Gastrocnemius medialis (tissue), 4 donors: ENCODE measurements at regions of chr9 and their contacts with region 1.

Region 1: DNA sequence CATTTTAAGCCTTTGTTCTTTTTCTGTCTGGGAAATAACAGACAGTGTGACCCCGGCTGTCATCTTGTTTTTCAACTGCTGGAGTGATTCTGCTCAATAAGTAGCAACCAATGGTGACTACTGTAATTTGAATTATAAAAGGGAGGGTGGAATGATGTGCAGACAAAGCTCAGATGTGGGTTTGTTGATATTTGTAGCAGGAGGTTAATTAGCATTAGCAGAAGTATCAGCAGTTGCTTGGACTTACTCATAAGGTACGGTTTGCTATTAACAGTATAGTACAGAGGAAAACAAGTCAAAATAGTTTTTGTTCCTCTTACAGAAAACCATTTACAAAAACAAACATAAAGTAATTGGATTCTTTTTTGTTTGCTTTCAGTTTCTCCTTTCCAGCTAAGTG is 140.4 kb downstream of the TUSC1 start:
- DNase-seq: no peak
- ATAC-seq: no peak
- H3K4me3 ChIP-seq: no peak overlapping the region
- H3K27ac ChIP-seq: no peak overlapping the region
- H3K4me1 ChIP-seq: no peaks in the 10 kb centered on the region
- H3K27me3 ChIP-seq: no peaks in the 10 kb centered on the region
- CTCF ChIP-seq: no peak
- POLR2A ChIP-seq: no peak

Region 2: GRCh38 chr9:25412646-25413045 is 125.2 kb before region 1 on chr9:
- in situ Hi-C with region 1: no loop called
- intact Hi-C with region 1: no loop called
- DNase-seq: no peak
- ATAC-seq: no peak
- H3K4me3 ChIP-seq: no peak overlapping the region
- H3K27ac ChIP-seq: no peak overlapping the region
- H3K4me1 ChIP-seq: peaks cover 0 to 4% of the 10 kb centered on the region in 2 donors
- H3K27me3 ChIP-seq: no peaks in the 10 kb centered on the region
- CTCF ChIP-seq: no peak
- POLR2A ChIP-seq: no peak

Region 3: GRCh38 chr9:25427898-25428297 is 109.9 kb before region 1 on chr9:
- in situ Hi-C with region 1: loop called in 1 of 4 experiments (anchors 25 kb)
- intact Hi-C with region 1: no loop called
- DNase-seq: no peak
- ATAC-seq: no peak
- H3K4me3 ChIP-seq: no peak overlapping the region
- H3K27ac ChIP-seq: no peak overlapping the region
- H3K4me1 ChIP-seq: no peaks in the 10 kb centered on the region
- H3K27me3 ChIP-seq: no peaks in the 10 kb centered on the region
- CTCF ChIP-seq: no peak
- POLR2A ChIP-seq: no peak

Region 4: GRCh38 chr9:25570802-25571201 is 33.0 kb after region 1 on chr9:
- in situ Hi-C with region 1: no loop called
- intact Hi-C with region 1: no loop called
- DNase-seq: no peak
- ATAC-seq: no peak
- H3K4me3 ChIP-seq: no peak overlapping the region
- H3K27ac ChIP-seq: no peak overlapping the region
- H3K4me1 ChIP-seq: no peaks in the 10 kb centered on the region
- H3K27me3 ChIP-seq: no peaks in the 10 kb centered on the region
- CTCF ChIP-seq: no peak
- POLR2A ChIP-seq: no peak

Region 5: DNA sequence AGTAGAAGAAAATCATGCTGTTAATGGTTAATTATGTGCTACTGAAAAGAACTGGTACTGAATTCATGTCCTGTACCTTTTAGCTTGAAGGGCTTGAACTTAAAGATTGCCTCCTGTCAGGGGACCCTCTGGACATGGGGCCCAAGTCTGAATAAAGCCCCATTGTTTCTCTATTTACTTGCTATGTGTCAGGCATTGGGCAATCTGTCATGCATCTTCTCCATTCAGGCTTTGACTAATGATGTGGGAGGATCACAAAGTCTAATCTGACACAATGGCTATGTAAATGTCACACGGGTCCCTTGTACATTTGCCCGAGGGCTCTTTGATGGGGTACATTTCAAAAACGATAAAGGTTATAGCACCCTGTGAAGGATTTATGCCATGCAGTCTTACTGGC is 204.4 kb after region 1 on chr9:
- in situ Hi-C with region 1: no loop called
- intact Hi-C with region 1: no loop called
- DNase-seq: no peak
- ATAC-seq: no peak
- H3K4me3 ChIP-seq: no peak overlapping the region
- H3K27ac ChIP-seq: no peak overlapping the region
- H3K4me1 ChIP-seq: no peaks in the 10 kb centered on the region
- H3K27me3 ChIP-seq: no peaks in the 10 kb centered on the region
- CTCF ChIP-seq: no peak
- POLR2A ChIP-seq: no peak